CD8-positive, alpha-beta T cell (primary cell): ENCODE measurements at regions of chr1 and their contacts with region 1.

Region 1: DNA sequence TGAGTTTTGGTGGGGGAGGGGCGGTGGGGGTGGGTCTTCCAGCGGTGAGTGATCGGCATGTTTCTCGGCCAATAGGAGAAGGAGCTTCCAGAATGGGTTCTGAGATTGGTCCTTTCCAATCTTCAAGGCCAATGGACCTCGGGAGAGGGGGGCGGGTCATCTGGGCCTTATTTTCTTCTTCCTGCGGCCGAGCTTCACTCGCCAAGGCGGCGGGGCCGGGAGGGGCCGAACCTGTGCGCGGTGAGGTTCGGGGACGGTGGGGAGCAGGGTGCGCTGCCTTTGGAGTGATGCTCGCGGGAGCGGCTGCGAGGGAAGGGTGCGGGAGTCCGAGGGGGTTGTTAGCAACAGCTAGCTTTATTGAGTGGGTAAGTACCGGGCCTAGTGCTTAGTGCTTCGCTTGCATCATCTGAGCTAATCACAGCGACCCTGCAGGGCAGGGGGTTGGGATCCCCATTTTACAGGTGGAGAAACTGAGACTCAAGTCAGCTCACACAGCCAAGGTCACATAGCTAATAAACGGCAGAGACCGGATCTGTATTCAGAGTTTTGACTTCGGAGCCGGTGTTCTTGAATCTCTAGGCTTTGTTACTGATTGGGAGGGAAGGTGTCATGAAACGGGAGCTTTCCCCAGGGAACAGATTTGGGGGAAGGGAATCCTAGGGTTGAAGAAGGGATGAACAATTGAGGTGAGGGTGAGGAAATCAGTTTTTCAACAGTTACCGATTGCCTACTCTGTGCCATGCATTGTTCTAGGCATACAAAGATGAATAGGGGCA is 549 bp downstream of the KDM4A start:
- DNase-seq: peak in 8 of 9 experiments; percentile 74 to 97 (median 89)
- ATAC-seq: peak; percentile 71
- H3K4me3 ChIP-seq: peak overlapping the region; percentile 87 to 92
- H3K4me3 Mint-ChIP-seq: peak overlapping the region; percentile 100
- H3K27ac ChIP-seq: peak overlapping the region; percentile 49 to 86
- H3K27ac Mint-ChIP-seq: peak overlapping the region; percentile 97
- H3K4me1 ChIP-seq: peaks cover 17% of the 10 kb centered on the region
- H3K4me1 Mint-ChIP-seq: peaks cover 41% of the 10 kb centered on the region
- H3K27me3 ChIP-seq: no peaks in the 10 kb centered on the region
- H3K27me3 Mint-ChIP-seq: no peaks in the 10 kb centered on the region
- CTCF ChIP-seq: no peak

Region 2: GRCh38 chr1:43666608-43667007 is 16.1 kb after region 1 on chr1:
- CTCF ChIA-PET with region 1: interaction called, 3 read pairs
- POLR2A ChIA-PET with region 1: interaction called, 14 read pairs
- intact Hi-C with region 1: no loop called
- DNase-seq: no peak
- ATAC-seq: no peak
- H3K4me3 ChIP-seq: no peak overlapping the region
- H3K4me3 Mint-ChIP-seq: no peak overlapping the region
- H3K27ac ChIP-seq: no peak overlapping the region
- H3K27ac Mint-ChIP-seq: no peak overlapping the region
- H3K4me1 ChIP-seq: no peaks in the 10 kb centered on the region
- H3K4me1 Mint-ChIP-seq: peaks cover 6% of the 10 kb centered on the region
- H3K27me3 ChIP-seq: no peaks in the 10 kb centered on the region
- H3K27me3 Mint-ChIP-seq: no peaks in the 10 kb centered on the region
- CTCF ChIP-seq: no peak

Region 3: GRCh38 chr1:43706598-43707495 is 56.3 kb after region 1 on chr1:
- CTCF ChIA-PET with region 1: no interaction called
- POLR2A ChIA-PET with region 1: interaction called, 16 read pairs
- intact Hi-C with region 1: loop called (anchors 1 to 2 kb)
- DNase-seq: peak; percentile 74 to 94 (median 89)
- ATAC-seq: peak; percentile 98
- H3K4me3 ChIP-seq: peak overlapping the region; percentile 80 to 84
- H3K4me3 Mint-ChIP-seq: peak overlapping the region; percentile 87
- H3K27ac ChIP-seq: peak overlapping the region; percentile 46 to 58
- H3K27ac Mint-ChIP-seq: peak overlapping the region; percentile 81
- H3K4me1 ChIP-seq: peaks cover 13% of the 10 kb centered on the region
- H3K4me1 Mint-ChIP-seq: peaks cover 30% of the 10 kb centered on the region
- H3K27me3 ChIP-seq: no peaks in the 10 kb centered on the region
- H3K27me3 Mint-ChIP-seq: no peaks in the 10 kb centered on the region
- CTCF ChIP-seq: no peak